ENCODE measurements at regions of chr14 and their contacts with region 1.

Region 1: GRCh38 chr14:74945823-74946682 is 9.3 kb downstream of the PGF start:
- DNase-seq: peak; percentile 71 to 76 (median 75)
- ATAC-seq: peak; percentile 78 to 86 (median 84)
- H3K4me3 ChIP-seq: no peak overlapping the region
- H3K27ac ChIP-seq: no peak overlapping the region
- H3K4me1 ChIP-seq: peaks cover 0 to 17% (median 7%) of the 10 kb centered on the region in 4 donors
- H3K27me3 ChIP-seq: no peaks in the 10 kb centered on the region
- CTCF ChIP-seq: peak; percentile 88 to 92 (median 88)
- POLR2A ChIP-seq: no peak

Region 2: DNA sequence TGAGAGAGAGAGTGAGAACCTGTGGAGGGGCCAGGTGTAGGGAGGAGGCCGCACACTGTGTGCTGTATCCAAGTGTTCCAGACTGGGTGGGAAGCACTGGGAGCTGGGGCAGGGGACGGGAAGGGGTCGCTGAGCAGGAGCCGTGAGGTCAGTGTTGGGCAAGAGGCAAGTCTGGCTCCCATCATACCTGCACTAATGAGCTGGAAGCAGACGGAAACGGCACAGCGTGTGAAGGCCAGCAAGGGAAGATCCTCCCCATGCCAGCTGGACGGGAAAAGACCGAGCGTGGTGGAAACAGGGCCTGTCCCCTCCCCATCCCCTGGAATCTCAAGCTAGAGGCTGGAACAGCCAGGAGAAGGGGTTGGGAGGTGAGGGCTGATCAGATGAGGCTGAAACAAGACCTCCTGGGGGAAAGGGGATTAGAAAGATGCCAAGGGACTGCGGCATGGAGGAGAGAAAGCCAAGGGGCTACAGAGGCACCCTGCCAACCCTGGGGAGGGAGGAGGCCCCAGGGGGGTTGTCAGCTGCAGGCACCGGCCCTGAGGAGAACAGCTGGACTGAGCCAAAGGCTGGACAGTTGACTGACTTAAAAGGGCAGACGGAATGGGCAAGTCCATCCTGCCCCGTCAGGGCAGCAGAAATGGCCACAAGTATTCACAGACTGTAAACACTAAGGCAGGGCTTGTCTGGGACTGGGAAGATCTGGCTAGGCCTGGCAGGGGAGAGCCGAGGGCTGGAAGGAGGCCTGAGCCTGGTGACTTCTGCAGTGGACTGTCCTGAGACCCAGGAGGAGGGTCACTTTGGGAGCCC is 315.0 kb before region 1 on chr14:
- intact Hi-C with region 1: no loop called
- DNase-seq: no peak
- ATAC-seq: peak in 3 of 4 donors; percentile 13 to 24 (median 20)
- H3K4me3 ChIP-seq: no peak overlapping the region
- H3K27ac ChIP-seq: no peak overlapping the region
- H3K4me1 ChIP-seq: peaks cover 0 to 3% (median 0%) of the 10 kb centered on the region in 4 donors
- H3K27me3 ChIP-seq: no peaks in the 10 kb centered on the region
- CTCF ChIP-seq: no peak
- POLR2A ChIP-seq: no peak

Region 3: DNA sequence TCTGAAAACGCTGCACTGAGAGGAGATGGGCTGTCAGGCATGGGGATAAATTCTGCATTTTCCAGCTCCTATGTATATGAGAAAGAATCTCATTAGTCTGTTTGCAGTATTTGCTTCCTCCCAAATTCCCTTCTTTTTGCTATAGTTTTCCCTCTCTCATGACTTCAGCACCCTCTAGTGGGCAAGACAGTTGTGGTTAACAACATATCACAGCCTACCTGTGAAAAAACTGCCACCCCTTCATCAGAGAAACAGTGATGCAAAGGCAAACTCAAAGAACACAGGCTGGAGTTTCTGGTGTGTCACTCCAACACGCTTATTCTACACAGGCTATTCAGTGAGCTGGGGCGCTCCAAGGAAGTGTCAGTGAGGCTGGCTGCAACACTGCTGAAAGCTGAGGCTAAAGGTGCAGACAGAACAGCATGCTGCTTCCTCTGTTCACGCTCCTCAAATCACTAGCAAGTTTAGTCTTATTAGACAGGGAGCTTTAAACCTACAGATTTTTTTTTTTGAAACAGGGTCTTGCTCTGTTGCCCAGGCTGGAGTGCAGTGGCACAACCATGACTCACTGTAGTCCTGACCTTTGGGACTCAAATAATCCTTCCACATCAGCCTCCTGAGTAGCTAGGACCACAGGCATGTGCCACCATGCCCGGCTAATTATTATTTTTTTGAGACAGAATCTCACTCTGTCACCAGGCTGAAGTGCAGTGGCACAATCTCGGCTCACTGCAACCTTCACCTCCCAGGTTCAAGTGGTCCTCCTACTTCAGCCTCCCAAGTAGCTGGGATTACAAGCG is 142.7 kb after region 1 on chr14:
- intact Hi-C with region 1: loop called (anchors 5 to 10 kb)
- DNase-seq: no peak
- ATAC-seq: peak; percentile 81 to 89 (median 85)
- H3K4me3 ChIP-seq: no peak overlapping the region
- H3K27ac ChIP-seq: no peak overlapping the region
- H3K4me1 ChIP-seq: no peaks in the 10 kb centered on the region
- H3K27me3 ChIP-seq: no peaks in the 10 kb centered on the region
- CTCF ChIP-seq: peak; percentile 72 to 89 (median 77)
- POLR2A ChIP-seq: no peak

Measured in right lobe of liver (tissue), 6 donors.